ENCODE measurements at regions of chr2 and their contacts with region 1.

Region 1: GRCh38 chr2:197499594-197500526 is at the starts of genes HSPD1 and HSPE1:
- DNase-seq: peak; percentile 100
- ATAC-seq: peak; percentile 91
- H3K4me3 ChIP-seq: peak within 1 kb of the TSS; percentile 68 to 99 (median 95)
- H3K27ac ChIP-seq: peak within 1 kb of the TSS; percentile 96
- H3K4me1 ChIP-seq: peaks cover 60% of the 10 kb centered on the region
- H3K27me3 ChIP-seq: no peaks in the 10 kb centered on the region; a peak in 1 of 5 replicates
- CTCF ChIP-seq: 0 out of 2 replicates have a peak, but pooled peaks have one; percentile 1
- EP300 ChIP-seq: peak in 1 of 2 experiments; percentile 99; a peak in 3 of 4 replicates
- POLR2A ChIP-seq: peak; percentile 97 to 100
- RAD21 ChIP-seq: peak; percentile 65
- total RNA-seq, gene HSPD1: 2,610 and 3,898 TPM in 2 replicates
- total RNA-seq, gene HSPE1: 823 and 1,040 TPM in 2 replicates

Region 2: GRCh38 chr2:197445746-197446145 is 54.1 kb before region 1 on chr2:
- CTCF ChIA-PET with region 1: no interaction called
- POLR2A ChIA-PET with region 1: interaction called, 264 read pairs
- in situ Hi-C with region 1: no loop called
- intact Hi-C with region 1: no loop called
- DNase-seq: no peak
- ATAC-seq: no peak; the same call in 2 of the 3 replicates
- H3K4me3 ChIP-seq: no peak overlapping the region
- H3K27ac ChIP-seq: no peak overlapping the region
- H3K4me1 ChIP-seq: peaks cover 7% of the 10 kb centered on the region; the same call in 1 of the 2 replicates
- H3K27me3 ChIP-seq: no peaks in the 10 kb centered on the region
- CTCF ChIP-seq: no peak
- EP300 ChIP-seq: no peak
- POLR2A ChIP-seq: no peak
- RAD21 ChIP-seq: no peak

Region 3: GRCh38 chr2:197464175-197464574 is 35.7 kb before region 1 on chr2:
- CTCF ChIA-PET with region 1: no interaction called
- POLR2A ChIA-PET with region 1: interaction called, 12 read pairs
- in situ Hi-C with region 1: no loop called
- intact Hi-C with region 1: no loop called
- DNase-seq: no peak
- ATAC-seq: no peak
- H3K4me3 ChIP-seq: no peak overlapping the region
- H3K27ac ChIP-seq: no peak overlapping the region
- H3K4me1 ChIP-seq: 0 out of 2 replicates have a peak, but pooled peaks cover 1% of the 10 kb centered on the region
- H3K27me3 ChIP-seq: no peaks in the 10 kb centered on the region
- CTCF ChIP-seq: no peak
- EP300 ChIP-seq: no peak
- POLR2A ChIP-seq: no peak
- RAD21 ChIP-seq: no peak

Region 4: GRCh38 chr2:197487385-197487784 is 12.5 kb before region 1 on chr2:
- CTCF ChIA-PET with region 1: no interaction called
- POLR2A ChIA-PET with region 1: interaction called, 71 read pairs
- in situ Hi-C with region 1: no loop called
- intact Hi-C with region 1: no loop called
- DNase-seq: no peak
- ATAC-seq: no peak
- H3K4me3 ChIP-seq: no peak overlapping the region
- H3K27ac ChIP-seq: no peak overlapping the region
- H3K4me1 ChIP-seq: peaks cover 37% of the 10 kb centered on the region
- H3K27me3 ChIP-seq: no peaks in the 10 kb centered on the region
- CTCF ChIP-seq: no peak
- EP300 ChIP-seq: no peak
- POLR2A ChIP-seq: 0 out of 4 replicates have a peak, but pooled peaks of 1 of the 2 experiments have one; percentile 22
- RAD21 ChIP-seq: no peak

Region 5: DNA sequence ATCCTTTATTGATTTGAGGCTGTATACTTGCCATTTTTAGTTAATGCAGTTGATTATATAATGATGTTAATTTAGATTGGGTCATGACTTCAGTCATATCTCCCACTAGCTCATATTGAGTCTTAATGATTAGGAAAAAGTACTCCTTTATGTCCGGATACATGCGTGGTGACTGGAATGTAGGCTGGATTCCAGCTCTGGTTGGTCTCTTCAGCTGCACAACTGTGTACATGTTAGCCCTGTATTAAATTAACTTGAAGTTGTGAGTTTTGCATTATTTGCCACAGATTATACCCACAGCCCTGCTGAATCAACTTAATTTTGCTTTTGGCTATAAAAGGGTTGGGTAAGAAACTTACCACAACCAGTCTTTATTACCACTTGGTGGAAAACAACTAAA is 38.6 kb after region 1 on chr2:
- CTCF ChIA-PET with region 1: no interaction called
- POLR2A ChIA-PET with region 1: no interaction called
- in situ Hi-C with region 1: no loop called
- intact Hi-C with region 1: loop called (anchors 5 kb)
- DNase-seq: no peak
- ATAC-seq: no peak
- H3K4me3 ChIP-seq: no peak overlapping the region
- H3K27ac ChIP-seq: no peak overlapping the region
- H3K4me1 ChIP-seq: no peaks in the 10 kb centered on the region
- H3K27me3 ChIP-seq: no peaks in the 10 kb centered on the region
- CTCF ChIP-seq: no peak
- EP300 ChIP-seq: no peak
- POLR2A ChIP-seq: no peak
- RAD21 ChIP-seq: no peak

Region 6: DNA sequence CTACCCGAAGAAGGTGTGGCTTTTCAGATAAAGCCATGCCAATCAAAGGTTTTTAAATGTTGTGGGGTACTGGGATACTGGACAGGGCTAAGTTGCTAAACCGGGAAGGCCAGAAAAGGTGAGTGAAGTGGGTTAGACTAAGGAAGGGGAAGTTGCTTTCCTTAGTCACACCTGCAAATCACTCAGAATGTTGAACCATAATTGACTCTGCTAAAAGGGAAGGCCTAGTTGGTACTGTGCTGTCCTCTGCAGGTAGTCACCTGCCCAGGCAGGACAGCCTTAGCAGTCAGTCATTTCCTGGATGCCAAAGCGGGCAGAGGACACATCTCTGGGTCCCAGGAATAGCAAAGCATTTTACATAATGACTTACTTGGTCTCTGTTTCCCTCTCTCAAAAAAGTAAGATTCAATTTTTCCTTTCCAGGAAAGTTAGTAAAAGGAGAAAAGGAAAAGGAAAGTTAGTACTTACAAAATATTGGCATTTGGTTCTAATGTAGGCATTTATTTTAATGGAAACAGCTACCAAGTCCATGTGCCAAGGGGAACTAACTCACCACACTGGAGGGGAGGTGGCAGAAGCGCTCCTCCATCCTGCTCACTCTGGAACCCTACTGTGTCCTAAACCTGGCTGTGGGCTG is 115.3 kb after region 1 on chr2:
- CTCF ChIA-PET with region 1: no interaction called
- POLR2A ChIA-PET with region 1: interaction called, 26 read pairs
- in situ Hi-C with region 1: no loop called
- intact Hi-C with region 1: loop called (anchors 2 kb)
- DNase-seq: peak; percentile 27
- ATAC-seq: peak; percentile 57
- H3K4me3 ChIP-seq: no peak overlapping the region
- H3K27ac ChIP-seq: no peak overlapping the region
- H3K4me1 ChIP-seq: peaks cover 34% of the 10 kb centered on the region
- H3K27me3 ChIP-seq: peaks cover 1 to 40% of the 10 kb centered on the region in 2 experiments; a peak in 4 of 5 replicates
- CTCF ChIP-seq: peak; percentile 75
- EP300 ChIP-seq: no peak
- POLR2A ChIP-seq: no peak
- RAD21 ChIP-seq: no peak